ENCODE measurements at regions of chr2 and their contacts with region 1.

Region 1: DNA sequence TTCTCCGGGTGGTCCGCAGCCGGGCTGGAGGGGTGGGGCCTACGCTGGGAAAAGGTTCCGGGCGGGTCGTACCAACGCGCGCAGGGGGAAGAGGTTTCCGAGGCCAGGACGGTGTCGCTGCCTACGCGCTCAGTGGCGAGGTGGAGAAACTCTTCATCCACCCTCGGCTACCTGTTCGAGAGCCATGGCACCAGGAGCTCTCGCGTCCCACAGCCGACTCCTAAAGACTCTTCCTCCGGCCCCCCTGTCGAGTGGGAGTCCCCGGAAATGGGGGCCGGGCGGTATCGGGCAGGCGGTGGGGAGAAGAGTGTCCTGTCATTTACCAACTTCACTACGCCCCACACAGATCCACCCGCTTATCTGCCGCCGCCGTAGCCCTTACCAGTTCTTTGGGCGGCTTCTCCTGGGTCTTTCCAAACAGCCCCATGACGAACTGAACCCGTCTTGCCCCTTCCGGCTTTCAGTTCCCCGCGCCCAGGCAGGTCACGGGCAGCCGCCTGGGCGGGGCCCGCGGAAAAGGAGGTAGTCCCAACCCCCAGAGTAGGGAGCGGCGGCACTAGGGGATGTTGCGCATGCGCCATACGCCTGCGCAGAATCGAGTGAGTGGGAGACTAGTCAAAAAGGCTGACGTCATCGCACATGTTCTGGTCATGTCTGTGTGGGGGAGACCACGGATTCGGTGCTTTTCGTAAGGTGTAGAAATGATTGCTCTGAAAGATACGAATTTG is at the start of gene CHMP3:
- DNase-seq: peak; percentile 97
- ATAC-seq: peak; percentile 92
- H3K4me3 Mint-ChIP-seq: peak within 1 kb of the TSS; percentile 97
- H3K27ac Mint-ChIP-seq: peak within 1 kb of the TSS; percentile 97
- H3K4me1 Mint-ChIP-seq: peaks cover 38% of the 10 kb centered on the region
- H3K27me3 Mint-ChIP-seq: no peaks in the 10 kb centered on the region
- CTCF ChIP-seq: no peak
- total RNA-seq, gene CHMP3: 30.1 to 31.6 TPM

Region 2: DNA sequence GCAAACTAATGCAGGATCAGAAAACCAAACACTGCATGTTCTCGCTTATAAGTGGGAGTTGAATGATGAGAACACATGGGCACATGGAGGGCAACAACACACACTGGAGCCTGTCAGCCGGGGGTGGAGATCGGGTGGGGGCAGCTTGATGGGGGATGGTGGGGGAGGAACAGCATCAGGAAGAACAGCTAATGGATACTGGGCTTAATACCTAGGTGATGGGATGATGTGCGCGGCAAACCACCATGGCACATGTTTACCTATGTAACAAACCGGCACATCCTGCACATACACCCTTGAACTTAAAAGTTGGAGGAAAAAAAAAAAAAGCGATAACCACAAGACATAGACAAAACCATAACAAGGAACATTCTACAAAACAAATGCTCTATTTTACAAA is 10.2 kb before region 1 on chr2:
- CTCF ChIA-PET with region 1: interaction called, 5 read pairs
- POLR2A ChIA-PET with region 1: interaction called, 12 read pairs
- intact Hi-C with region 1: no loop called
- DNase-seq: peak; percentile 49
- ATAC-seq: peak; percentile 51
- H3K4me3 Mint-ChIP-seq: peak overlapping the region; percentile 71
- H3K27ac Mint-ChIP-seq: peak overlapping the region; percentile 90
- H3K4me1 Mint-ChIP-seq: peaks cover 31% of the 10 kb centered on the region
- H3K27me3 Mint-ChIP-seq: no peaks in the 10 kb centered on the region
- CTCF ChIP-seq: no peak

Region 3: DNA sequence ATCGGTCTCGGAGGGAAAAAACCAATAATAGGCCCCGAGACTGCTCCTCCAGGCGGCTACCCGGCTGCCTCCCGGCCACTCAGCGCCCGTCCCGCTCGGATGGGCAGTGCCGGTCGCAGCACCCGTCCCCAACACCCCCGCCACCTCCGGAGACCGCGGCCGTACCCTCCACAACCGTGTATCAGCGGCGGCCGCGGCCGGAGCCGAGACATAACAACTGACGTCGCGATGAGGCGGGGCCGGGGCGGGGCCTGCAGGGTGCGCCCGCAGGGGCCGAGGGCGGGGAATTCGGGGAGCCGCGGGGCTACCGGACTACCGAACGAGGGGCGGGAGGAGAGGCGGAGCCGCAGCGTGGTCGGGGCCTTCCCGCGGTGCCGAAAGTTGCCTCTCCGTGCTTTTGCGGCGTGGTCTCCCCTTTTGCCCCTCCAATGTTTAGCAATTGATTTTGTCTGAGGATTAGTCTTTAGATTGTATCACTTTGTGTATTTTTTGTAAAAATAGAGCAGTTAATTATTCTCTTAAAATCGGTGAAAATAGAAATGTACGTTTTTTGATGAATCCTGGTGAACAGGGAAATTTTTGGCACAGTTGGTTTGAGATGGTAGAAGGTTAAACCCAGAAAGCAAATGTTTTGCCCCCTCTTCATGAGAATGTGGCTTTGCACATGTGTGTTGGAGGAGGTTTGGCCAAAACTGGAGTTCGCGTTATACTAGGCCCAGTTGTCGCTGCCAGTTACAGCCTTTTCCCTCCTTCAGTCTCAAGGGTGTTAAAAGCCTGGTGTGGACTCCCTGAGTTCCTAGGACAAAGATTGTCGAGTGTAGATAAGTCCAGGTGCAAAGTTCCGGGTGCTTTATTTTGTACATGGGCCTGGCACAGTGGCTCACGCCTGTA is 60.8 kb after region 1 on chr2 and contains the start of gene RNF103:
- CTCF ChIA-PET with region 1: interaction called, 3 read pairs
- POLR2A ChIA-PET with region 1: interaction called, 7 read pairs
- intact Hi-C with region 1: loop called (anchors 2 kb)
- DNase-seq: peak; percentile 94
- ATAC-seq: peak; percentile 89
- H3K4me3 Mint-ChIP-seq: peak within 1 kb of the TSS; percentile 96
- H3K27ac Mint-ChIP-seq: peak within 1 kb of the TSS; percentile 96
- H3K4me1 Mint-ChIP-seq: peaks cover 32% of the 10 kb centered on the region
- H3K27me3 Mint-ChIP-seq: no peaks in the 10 kb centered on the region
- CTCF ChIP-seq: no peak
- total RNA-seq, gene RNF103: 10.3 to 10.8 TPM